CD4-positive, alpha-beta memory T cell (primary cell): ENCODE measurements at regions of chr12 and their contacts with region 1.

Region 1: GRCh38 chr12:132908145-132909044 is 21.0 kb upstream of the CHFR start:
- DNase-seq: peak; percentile 93 to 99 (median 96)
- H3K4me3 ChIP-seq: peak overlapping the region; percentile 57 to 59
- H3K4me3 Mint-ChIP-seq: peak overlapping the region; percentile 91 to 98 (median 96)
- H3K27ac ChIP-seq: peak overlapping the region; percentile 75
- H3K27ac Mint-ChIP-seq: peak overlapping the region; percentile 95 to 100 (median 98)
- H3K4me1 ChIP-seq: peaks cover 11% of the 10 kb centered on the region
- H3K4me1 Mint-ChIP-seq: peaks cover 3 to 27% (median 16%) of the 10 kb centered on the region in 4 donors
- H3K27me3 ChIP-seq: no peaks in the 10 kb centered on the region
- H3K27me3 Mint-ChIP-seq: peaks cover 0 to 2% of the 10 kb centered on the region in 2 donors

Region 2: DNA sequence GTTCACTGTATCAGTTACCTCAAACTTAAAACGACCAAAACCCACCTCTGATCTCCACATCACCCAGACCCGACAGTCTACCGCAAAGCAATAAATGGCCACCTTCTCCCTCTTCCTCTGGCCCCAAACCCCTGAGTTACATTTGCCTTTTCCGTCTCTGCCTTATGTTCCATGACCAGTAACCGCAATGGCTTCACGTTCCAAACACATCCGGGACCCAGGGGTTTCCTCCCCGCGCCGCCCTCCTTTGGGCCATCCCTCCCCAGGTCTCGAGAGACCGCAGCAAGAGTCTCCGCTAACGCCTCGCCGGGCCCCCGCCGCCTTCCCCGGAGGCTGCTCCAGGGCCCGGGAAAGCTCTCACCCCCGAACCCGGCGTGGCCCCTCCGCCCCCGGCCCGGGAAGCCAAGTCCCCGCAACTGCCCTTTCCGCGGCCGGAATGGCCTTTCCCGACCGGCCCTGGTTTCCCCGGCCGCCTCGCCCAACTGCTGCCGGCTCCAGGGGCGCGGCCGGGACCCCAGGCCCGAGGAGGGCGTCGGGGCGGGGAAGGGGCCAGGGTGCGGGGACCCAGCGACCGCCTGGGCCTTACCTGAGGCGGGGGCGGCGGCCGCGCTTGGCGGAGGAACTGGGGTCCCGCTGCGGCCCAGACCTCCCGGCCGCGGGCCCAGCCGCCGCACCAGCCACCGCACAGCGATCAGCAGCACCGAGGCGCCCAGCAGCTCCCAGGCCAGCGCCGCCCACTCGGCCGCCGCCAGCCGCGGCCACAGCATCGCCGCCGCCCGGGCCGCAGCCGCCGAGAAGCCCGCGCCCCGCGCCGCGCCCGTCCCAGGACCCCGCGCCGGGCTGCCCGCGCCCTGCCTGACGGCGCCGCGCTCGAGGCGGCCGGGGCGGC is 147.1 kb before region 1 on chr12 and contains the start of gene ANKLE2:
- CTCF ChIA-PET with region 1: interaction called, 45 read pairs
- POLR2A ChIA-PET with region 1: interaction called, 5 read pairs
- intact Hi-C with region 1: loop called (anchors 2 kb)
- DNase-seq: peak; percentile 68 to 86 (median 70)
- H3K4me3 ChIP-seq: peak within 1 kb of the TSS; percentile 75 to 81
- H3K4me3 Mint-ChIP-seq: peak within 1 kb of the TSS; percentile 82 to 99 (median 93)
- H3K27ac ChIP-seq: peak within 1 kb of the TSS; percentile 89
- H3K27ac Mint-ChIP-seq: peak within 1 kb of the TSS; percentile 95 to 99 (median 97)
- H3K4me1 ChIP-seq: peaks cover 24% of the 10 kb centered on the region
- H3K4me1 Mint-ChIP-seq: peaks cover 14 to 27% (median 22%) of the 10 kb centered on the region in 4 donors
- H3K27me3 ChIP-seq: no peaks in the 10 kb centered on the region
- H3K27me3 Mint-ChIP-seq: no peaks in the 10 kb centered on the region
- total RNA-seq, gene ANKLE2: 95.6 to 101 TPM

Region 3: GRCh38 chr12:132828706-132829534 is 79.5 kb before region 1 on chr12 and contains the start of gene GOLGA3:
- CTCF ChIA-PET with region 1: interaction called, 18 read pairs
- POLR2A ChIA-PET with region 1: interaction called, 23 read pairs
- intact Hi-C with region 1: loop called (anchors 1 kb)
- DNase-seq: peak; percentile 93 to 96 (median 95)
- H3K4me3 ChIP-seq: peak within 1 kb of the TSS; percentile 58 to 91
- H3K4me3 Mint-ChIP-seq: peak within 1 kb of the TSS; percentile 91 to 99 (median 96)
- H3K27ac ChIP-seq: peak within 1 kb of the TSS; percentile 98
- H3K27ac Mint-ChIP-seq: peak within 1 kb of the TSS; percentile 99 to 100 (median 100)
- H3K4me1 ChIP-seq: peaks cover 30% of the 10 kb centered on the region
- H3K4me1 Mint-ChIP-seq: peaks cover 22 to 63% (median 43%) of the 10 kb centered on the region in 4 donors
- H3K27me3 ChIP-seq: no peaks in the 10 kb centered on the region
- H3K27me3 Mint-ChIP-seq: no peaks in the 10 kb centered on the region
- total RNA-seq, gene GOLGA3: 64.1 to 67.6 TPM

Region 4: GRCh38 chr12:132940071-132940719 is 31.8 kb after region 1 on chr12:
- CTCF ChIA-PET with region 1: no interaction called
- POLR2A ChIA-PET with region 1: no interaction called
- intact Hi-C with region 1: no loop called
- DNase-seq: no peak
- H3K4me3 ChIP-seq: no peak overlapping the region
- H3K4me3 Mint-ChIP-seq: no peak overlapping the region
- H3K27ac ChIP-seq: no peak overlapping the region
- H3K27ac Mint-ChIP-seq: no peak overlapping the region
- H3K4me1 ChIP-seq: no peaks in the 10 kb centered on the region
- H3K4me1 Mint-ChIP-seq: no peaks in the 10 kb centered on the region
- H3K27me3 ChIP-seq: no peaks in the 10 kb centered on the region
- H3K27me3 Mint-ChIP-seq: no peaks in the 10 kb centered on the region

Region 5: DNA sequence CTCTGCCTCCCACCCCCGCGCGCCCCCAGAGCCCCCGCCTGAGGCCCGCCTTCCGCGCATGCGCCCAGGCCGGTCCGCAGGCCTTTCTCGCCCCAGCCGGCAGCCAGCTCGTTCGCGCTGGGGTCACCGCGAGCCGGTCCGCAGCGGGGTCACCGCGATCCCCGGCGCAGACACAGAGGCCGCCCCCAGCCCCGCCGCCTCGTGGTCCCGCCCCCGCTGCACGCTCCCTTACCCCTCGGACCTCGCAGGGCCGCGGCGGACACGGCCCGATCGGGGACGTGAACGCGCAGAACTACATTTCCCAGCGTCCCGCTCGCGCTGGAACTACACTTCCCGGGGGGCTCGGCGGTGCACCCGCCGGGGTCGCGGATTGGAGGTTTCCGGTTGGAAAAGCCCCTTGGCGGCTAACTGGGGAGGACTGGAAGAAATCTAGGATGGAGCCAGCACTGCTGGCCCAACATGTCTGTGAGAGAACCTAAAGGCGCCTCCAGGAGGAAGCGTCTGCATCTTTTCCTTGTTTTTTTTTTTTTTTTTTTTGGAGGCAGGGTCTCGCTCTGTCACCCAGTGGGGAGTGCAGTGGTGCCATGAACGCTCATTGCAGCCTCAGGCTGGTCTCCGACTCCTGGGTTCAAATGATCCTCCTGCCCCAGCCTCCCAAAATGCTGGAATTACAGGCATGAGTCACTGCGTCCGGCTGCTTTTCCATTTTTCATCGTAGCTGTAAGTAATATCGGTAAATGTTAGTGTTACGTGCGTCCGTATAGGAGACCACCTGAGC is 47.8 kb after region 1 on chr12 and contains the start of gene ZNF605:
- CTCF ChIA-PET with region 1: interaction called, 6 read pairs
- POLR2A ChIA-PET with region 1: interaction called, 6 read pairs
- intact Hi-C with region 1: loop called (anchors 1 kb)
- DNase-seq: peak; percentile 82 to 92 (median 86)
- H3K4me3 ChIP-seq: peak within 1 kb of the TSS; percentile 53 to 97
- H3K4me3 Mint-ChIP-seq: peak within 1 kb of the TSS; percentile 93 to 98 (median 94)
- H3K27ac ChIP-seq: peak within 1 kb of the TSS; percentile 81
- H3K27ac Mint-ChIP-seq: peak within 1 kb of the TSS; percentile 83 to 97 (median 94)
- H3K4me1 ChIP-seq: peaks cover 13% of the 10 kb centered on the region
- H3K4me1 Mint-ChIP-seq: peaks cover 20 to 40% (median 29%) of the 10 kb centered on the region in 4 donors
- H3K27me3 ChIP-seq: no peaks in the 10 kb centered on the region
- H3K27me3 Mint-ChIP-seq: no peaks in the 10 kb centered on the region
- total RNA-seq, gene ZNF605: 16.5 to 17.2 TPM

Region 6: DNA sequence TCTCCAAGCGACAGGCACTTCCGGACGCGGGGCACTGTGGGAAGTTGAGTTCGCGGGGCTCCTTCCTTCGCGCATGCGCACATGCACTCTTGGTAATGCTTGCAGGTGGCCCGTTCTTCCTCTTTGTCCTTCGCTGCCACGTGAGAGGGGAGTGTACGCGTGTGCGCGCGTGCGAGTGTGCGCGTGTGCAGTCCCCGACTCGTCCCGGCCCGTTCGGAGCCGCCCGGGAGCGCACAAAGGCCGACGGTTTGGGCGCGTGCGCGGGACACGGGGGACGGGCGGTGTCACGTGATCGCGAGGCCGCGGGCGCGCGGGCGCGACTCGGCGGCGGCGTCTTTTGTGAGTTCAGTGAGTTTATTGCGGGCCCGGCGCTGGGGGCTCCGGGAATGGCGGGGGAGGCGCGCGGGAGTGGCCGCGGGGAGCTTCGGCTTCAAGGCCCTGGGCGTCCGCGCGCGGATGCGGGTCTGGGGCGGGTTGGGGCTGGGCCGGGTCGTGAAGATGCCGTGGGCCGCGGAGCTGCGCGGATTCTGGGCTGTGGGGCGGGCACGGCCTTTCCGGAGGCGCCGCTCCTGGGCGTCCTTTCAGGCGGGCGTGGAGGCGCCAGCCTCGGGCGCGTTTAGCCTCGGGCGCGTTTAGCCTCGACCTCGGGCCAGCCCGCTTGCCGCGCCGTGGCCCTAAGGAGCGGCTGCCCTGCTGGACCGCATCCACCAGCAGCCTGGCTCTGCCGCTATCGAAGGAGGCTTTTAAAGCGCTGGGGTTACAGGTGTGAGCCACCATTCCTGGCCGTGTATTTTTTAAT is 129.0 kb after region 1 on chr12 and contains the start of gene ZNF84:
- CTCF ChIA-PET with region 1: no interaction called
- POLR2A ChIA-PET with region 1: interaction called, 4 read pairs
- intact Hi-C with region 1: loop called (anchors 1 kb)
- DNase-seq: peak; percentile 96 to 99 (median 98)
- H3K4me3 ChIP-seq: peak within 1 kb of the TSS in 1 of 2 donors; percentile 54
- H3K4me3 Mint-ChIP-seq: peak within 1 kb of the TSS; percentile 85 to 98 (median 94)
- H3K27ac ChIP-seq: peak within 1 kb of the TSS; percentile 77
- H3K27ac Mint-ChIP-seq: peak within 1 kb of the TSS; percentile 91 to 98 (median 96)
- H3K4me1 ChIP-seq: peaks cover 12% of the 10 kb centered on the region
- H3K4me1 Mint-ChIP-seq: peaks cover 3 to 14% (median 7%) of the 10 kb centered on the region in 4 donors
- H3K27me3 ChIP-seq: no peaks in the 10 kb centered on the region
- H3K27me3 Mint-ChIP-seq: no peaks in the 10 kb centered on the region
- total RNA-seq, gene ZNF84: 42.0 to 46.2 TPM

Region 7: DNA sequence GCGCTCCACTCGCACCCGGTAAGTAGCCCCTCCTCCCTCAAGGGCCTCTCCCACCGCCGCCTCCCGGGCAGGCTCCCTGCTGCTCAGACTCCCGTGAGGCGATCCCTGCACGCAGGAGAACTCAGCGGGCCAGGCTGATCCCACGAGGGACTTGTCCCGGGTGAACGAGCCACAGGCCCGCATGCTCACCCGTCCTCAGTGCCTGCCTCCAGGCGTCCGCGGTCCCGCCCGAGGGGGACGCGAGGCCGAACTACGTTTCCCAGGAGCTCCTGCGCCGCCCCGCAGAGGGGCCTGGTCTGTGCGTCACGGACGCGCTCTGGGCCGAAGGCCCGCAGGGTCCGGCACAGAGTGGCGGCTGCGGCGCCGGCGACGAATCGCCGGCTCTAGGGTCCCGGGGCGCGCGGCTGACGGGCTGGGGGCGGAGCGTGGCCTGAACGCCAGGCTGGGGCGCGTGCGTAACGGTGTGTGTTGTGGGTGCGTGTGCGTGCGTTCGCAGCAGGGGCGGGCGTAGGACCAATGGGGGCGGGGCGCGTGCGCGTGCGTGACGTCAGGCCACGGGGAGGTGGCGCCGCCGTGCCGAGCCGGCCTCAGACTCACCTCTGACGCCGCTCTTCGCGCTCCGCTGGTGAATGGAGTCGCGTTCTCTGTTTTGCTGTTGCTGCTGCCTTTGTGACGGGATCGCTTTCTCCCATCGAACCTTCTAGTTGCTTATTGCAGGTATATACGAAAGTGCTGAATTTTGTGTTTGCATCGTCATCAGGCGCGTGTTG is 221.8 kb after region 1 on chr12 and contains the starts of genes ZNF10 and ZNF891:
- CTCF ChIA-PET with region 1: no interaction called
- POLR2A ChIA-PET with region 1: interaction called, 13 read pairs
- intact Hi-C with region 1: loop called (anchors 1 kb)
- DNase-seq: peak; percentile 95 to 98 (median 98)
- H3K4me3 ChIP-seq: peak within 1 kb of the TSS; percentile 59 to 87
- H3K4me3 Mint-ChIP-seq: peak within 1 kb of the TSS; percentile 87 to 99 (median 95)
- H3K27ac ChIP-seq: peak within 1 kb of the TSS; percentile 98
- H3K27ac Mint-ChIP-seq: peak within 1 kb of the TSS; percentile 92 to 100 (median 99)
- H3K4me1 ChIP-seq: peaks cover 10% of the 10 kb centered on the region
- H3K4me1 Mint-ChIP-seq: peaks cover 11 to 25% (median 19%) of the 10 kb centered on the region in 4 donors
- H3K27me3 ChIP-seq: no peaks in the 10 kb centered on the region
- H3K27me3 Mint-ChIP-seq: no peaks in the 10 kb centered on the region
- total RNA-seq, gene ZNF10: 17.4 to 19.6 TPM
- total RNA-seq, gene ZNF891: 6.2 to 7.3 TPM